Activated CD4-positive, alpha-beta T cell treated with anti-CD3 and anti-CD28 coated beads for 36 hours (primary cell): ENCODE measurements at regions of chr3 and their contacts with region 1.

Region 1: DNA sequence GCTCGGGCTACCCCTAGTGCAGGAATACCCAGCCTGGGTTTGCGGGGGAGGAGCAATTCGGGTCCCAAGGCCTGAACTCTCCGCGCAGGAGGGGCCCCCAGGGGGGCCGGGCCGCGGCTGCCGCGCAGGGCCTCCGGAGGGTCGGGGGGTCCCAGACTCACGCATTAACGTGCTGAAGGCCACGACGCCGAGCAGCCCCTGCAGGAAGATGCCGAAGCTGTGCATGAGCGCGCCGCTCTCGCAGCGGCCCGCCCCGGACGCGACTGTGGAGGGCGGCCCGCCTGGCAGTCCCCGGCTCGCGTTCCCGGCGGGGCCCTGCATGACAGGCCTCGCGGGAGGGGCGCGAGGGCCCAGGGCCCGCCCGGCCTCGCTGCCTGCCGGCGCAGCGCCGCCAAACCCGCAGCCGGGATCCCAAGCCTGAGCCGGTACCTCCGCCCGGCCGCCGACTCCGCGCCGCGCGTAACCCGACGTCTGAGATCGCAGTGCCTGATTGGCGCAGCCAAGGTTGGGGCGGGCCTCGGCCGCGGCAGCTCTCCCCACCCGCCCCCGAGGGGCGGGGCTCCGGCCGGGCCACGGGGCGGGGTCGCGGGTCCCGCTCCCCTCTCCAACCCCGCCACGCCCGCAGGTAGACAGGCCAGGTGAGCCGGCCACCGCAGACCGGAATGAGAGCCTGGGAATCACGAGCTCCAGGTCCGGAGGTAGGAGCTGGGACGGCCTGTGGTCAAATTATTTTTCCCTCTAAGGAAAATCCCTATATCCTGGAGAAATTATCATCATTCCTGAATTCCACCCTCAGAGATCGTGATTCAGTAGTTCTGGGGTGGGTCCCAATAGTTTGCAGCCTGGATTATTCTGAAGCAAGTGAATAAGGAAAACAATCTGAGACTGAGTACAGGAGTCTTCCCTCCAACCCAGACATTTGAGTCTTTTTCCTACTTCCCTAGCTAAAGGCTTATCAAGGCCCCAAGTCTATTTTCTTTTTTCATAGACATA is at the start of gene STIMATE:
- DNase-seq: peak; percentile 91
- ATAC-seq: peak; percentile 82
- H3K4me3 Mint-ChIP-seq: peak within 1 kb of the TSS; percentile 81
- H3K27ac Mint-ChIP-seq: peak within 1 kb of the TSS; percentile 48
- H3K4me1 Mint-ChIP-seq: peaks cover 49% of the 10 kb centered on the region
- H3K27me3 Mint-ChIP-seq: no peaks in the 10 kb centered on the region
- total RNA-seq, gene STIMATE: 12.0 to 17.1 TPM

Region 2: DNA sequence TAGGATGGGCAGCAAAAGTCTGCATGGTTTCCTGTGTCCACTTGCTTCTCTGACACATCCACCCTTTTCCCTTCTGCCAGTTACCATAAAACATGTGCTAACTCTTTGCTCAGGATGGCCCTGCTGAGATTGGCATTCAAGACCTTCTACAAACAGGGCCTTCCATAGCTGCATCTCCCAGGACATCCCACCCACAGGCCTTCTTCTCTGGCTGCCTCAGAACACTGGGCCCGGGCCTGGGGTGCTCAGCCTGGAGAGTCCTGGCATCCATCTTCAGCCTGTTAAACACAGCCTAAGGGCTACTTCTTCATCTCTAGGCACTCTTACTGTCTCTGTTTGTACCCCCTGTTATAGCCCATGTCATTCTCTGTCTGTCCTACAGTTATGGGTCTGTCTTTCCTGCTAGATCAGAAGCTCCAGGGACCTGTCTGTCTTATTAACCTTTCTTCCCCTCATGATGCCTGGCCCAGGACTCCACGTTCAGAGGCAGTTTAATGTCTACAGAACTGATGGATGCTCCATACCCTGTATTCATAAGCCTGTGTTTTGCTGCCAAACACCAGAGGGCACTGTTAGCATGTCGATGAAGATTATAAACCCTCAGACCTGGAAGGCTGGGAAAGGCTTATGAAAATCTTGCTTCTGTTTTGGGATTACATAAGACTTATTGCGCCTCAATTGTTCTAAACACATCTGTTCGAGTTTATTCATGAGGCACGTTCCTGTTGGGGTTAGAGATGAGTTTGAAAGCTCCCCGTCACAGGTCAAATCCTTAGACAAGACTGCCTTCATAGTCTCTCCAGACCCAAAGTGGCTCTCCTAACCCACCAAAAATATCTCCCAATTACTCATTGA is 469.0 kb before region 1 on chr3:
- CTCF ChIA-PET with region 1: no interaction called
- POLR2A ChIA-PET with region 1: no interaction called
- intact Hi-C with region 1: no loop called
- DNase-seq: peak; percentile 61
- ATAC-seq: peak; percentile 90
- H3K4me3 Mint-ChIP-seq: no peak overlapping the region
- H3K27ac Mint-ChIP-seq: no peak overlapping the region
- H3K4me1 Mint-ChIP-seq: no peaks in the 10 kb centered on the region
- H3K27me3 Mint-ChIP-seq: no peaks in the 10 kb centered on the region

Region 3: DNA sequence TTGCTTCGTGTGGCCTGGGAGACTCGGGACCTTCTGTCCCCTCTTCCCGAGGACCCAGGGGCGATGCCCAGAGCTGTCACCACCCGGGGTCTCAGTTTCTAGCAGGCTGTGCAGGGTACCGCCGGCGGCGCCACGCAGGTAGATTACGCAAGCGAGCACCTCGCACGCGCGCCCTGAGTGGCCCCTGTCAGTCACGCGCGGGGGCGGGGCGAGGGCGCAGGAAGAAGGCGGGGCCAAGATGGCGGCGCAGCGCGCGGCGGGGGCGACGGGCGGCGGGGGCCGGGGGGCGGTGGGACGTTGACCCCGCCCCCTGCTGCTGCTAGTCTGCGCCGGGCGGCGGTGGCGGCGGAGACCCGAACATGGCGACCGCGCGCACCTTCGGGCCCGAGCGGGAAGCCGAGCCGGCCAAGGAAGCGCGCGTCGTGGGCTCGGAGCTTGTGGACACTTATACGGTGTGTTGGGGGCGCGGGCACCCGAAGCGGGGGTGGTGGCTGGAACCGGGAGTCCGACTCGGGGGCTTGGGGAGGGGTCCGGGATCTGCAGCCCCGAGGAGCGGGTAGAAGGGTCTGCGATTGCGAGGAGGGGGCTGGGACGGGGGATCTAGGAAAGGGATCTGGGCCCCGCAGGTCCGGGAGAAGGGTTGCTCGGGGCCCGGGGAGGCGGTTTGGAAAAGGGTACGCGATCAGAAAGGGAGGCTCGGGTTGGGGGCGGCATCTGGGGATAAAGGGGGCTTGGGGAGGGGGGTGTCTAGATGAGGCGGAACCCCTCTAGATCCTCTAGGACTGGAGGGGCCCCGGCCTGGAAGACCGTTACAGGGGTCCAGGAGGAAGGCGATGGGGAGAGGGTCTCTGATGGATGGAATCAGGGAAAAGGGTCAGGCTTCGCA is 441.9 kb before region 1 on chr3 and contains the start of gene NISCH:
- CTCF ChIA-PET with region 1: no interaction called
- POLR2A ChIA-PET with region 1: no interaction called
- intact Hi-C with region 1: loop called in 1 of 2 experiments (anchors 5 kb)
- DNase-seq: peak; percentile 98
- ATAC-seq: peak; percentile 88
- H3K4me3 Mint-ChIP-seq: peak within 1 kb of the TSS; percentile 96
- H3K27ac Mint-ChIP-seq: peak within 1 kb of the TSS; percentile 95
- H3K4me1 Mint-ChIP-seq: peaks cover 36% of the 10 kb centered on the region
- H3K27me3 Mint-ChIP-seq: no peaks in the 10 kb centered on the region
- total RNA-seq, gene NISCH: 61.4 to 68.9 TPM

Region 4: DNA sequence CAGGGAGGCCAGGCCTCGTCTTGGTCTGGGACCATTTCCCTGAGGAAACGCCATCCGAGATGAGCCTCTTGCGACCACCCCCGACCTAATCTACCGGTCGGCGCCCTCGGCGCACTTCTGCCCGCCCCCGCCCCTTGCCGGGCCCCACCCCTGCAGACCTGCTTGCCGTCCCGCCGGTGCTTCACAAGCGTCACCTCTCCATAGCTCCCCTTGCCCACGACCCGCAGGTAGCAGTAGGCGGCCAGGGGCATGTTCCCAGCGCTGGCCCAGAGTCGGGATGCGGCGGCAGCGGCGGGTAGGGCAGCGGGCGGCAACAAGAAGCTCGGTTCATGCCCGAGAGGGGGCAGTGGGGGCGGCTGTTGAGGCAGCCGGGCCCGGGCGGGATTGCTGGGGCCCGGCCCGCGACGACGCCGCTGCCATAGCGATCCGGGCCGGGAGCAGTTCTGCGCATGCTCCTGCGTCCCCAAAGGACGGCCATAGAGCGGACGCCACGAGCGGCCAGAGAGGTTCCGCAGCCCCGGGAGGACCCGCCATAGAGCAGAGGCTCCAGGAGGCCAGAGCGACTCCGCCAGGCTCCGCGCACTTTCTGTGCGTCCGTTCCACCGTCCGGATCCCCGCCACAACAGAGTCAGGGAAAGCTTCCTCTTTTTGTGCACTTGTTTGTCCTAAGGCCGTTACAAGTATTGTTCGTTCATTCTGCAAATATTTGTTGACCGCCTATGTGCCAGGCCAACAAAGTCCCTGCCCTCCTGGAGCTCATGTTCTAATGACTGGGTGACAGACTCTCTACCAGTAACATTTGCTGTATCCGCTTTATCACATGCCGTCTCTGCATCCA is 126.7 kb before region 1 on chr3 and contains the start of gene NEK4:
- CTCF ChIA-PET with region 1: no interaction called
- POLR2A ChIA-PET with region 1: no interaction called
- intact Hi-C with region 1: loop called in 1 of 2 experiments (anchors 2 kb)
- DNase-seq: peak; percentile 93
- ATAC-seq: peak; percentile 98
- H3K4me3 Mint-ChIP-seq: peak within 1 kb of the TSS; percentile 81
- H3K27ac Mint-ChIP-seq: peak within 1 kb of the TSS; percentile 94
- H3K4me1 Mint-ChIP-seq: peaks cover 15% of the 10 kb centered on the region
- H3K27me3 Mint-ChIP-seq: no peaks in the 10 kb centered on the region
- total RNA-seq, gene NEK4: 19.1 to 21.4 TPM

Region 5: DNA sequence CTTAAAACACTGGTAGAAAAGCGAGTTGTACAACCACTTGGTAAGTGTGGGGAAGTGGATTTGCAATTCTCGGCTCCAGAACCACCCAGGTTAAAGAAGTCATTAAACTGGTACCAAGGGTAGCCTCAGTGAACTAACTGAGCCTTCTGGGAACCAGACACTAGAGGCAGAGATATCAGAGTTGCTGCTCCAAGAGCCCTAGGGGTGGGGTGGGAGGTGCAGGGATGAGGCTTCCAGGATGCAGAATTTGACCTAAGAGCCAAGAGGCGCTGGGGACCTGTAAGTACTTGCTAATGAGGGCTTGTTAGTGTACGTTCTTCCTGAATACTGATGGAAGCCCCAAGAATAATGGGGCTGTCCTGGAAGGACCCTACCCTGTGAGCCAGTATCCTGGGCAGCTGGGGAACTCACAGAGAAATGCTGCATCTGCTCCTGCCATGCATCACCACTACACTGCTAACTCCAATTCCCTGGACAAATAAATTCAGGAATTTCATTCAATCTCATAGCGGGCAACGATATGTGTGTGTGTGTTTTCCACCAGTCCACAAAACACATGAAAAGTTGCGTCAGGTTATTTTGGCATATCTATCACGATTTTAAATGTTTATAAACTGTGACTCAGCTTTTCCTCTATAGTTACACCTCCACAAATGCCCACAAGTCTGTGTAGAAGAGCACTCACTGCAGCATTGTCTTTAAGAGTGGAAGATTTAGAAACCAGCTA is 23.8 kb before region 1 on chr3:
- CTCF ChIA-PET with region 1: interaction called, 11 read pairs
- POLR2A ChIA-PET with region 1: no interaction called
- intact Hi-C with region 1: loop called in 1 of 2 experiments (anchors 1 kb)
- DNase-seq: no peak
- ATAC-seq: peak; percentile 69
- H3K4me3 Mint-ChIP-seq: no peak overlapping the region
- H3K27ac Mint-ChIP-seq: no peak overlapping the region
- H3K4me1 Mint-ChIP-seq: peaks cover 37% of the 10 kb centered on the region
- H3K27me3 Mint-ChIP-seq: no peaks in the 10 kb centered on the region

Region 6: GRCh38 chr3:52887166-52887565 is 10.3 kb before region 1 on chr3:
- CTCF ChIA-PET with region 1: no interaction called
- POLR2A ChIA-PET with region 1: no interaction called
- intact Hi-C with region 1: no loop called
- DNase-seq: no peak
- ATAC-seq: no peak
- H3K4me3 Mint-ChIP-seq: no peak overlapping the region
- H3K27ac Mint-ChIP-seq: no peak overlapping the region
- H3K4me1 Mint-ChIP-seq: peaks cover 25% of the 10 kb centered on the region
- H3K27me3 Mint-ChIP-seq: no peaks in the 10 kb centered on the region

Region 7: GRCh38 chr3:52910823-52911222 is 13.4 kb after region 1 on chr3:
- CTCF ChIA-PET with region 1: no interaction called
- POLR2A ChIA-PET with region 1: no interaction called
- intact Hi-C with region 1: no loop called
- DNase-seq: no peak
- ATAC-seq: no peak
- H3K4me3 Mint-ChIP-seq: no peak overlapping the region
- H3K27ac Mint-ChIP-seq: peak overlapping the region; percentile 58
- H3K4me1 Mint-ChIP-seq: no peaks in the 10 kb centered on the region
- H3K27me3 Mint-ChIP-seq: no peaks in the 10 kb centered on the region

Region 8: DNA sequence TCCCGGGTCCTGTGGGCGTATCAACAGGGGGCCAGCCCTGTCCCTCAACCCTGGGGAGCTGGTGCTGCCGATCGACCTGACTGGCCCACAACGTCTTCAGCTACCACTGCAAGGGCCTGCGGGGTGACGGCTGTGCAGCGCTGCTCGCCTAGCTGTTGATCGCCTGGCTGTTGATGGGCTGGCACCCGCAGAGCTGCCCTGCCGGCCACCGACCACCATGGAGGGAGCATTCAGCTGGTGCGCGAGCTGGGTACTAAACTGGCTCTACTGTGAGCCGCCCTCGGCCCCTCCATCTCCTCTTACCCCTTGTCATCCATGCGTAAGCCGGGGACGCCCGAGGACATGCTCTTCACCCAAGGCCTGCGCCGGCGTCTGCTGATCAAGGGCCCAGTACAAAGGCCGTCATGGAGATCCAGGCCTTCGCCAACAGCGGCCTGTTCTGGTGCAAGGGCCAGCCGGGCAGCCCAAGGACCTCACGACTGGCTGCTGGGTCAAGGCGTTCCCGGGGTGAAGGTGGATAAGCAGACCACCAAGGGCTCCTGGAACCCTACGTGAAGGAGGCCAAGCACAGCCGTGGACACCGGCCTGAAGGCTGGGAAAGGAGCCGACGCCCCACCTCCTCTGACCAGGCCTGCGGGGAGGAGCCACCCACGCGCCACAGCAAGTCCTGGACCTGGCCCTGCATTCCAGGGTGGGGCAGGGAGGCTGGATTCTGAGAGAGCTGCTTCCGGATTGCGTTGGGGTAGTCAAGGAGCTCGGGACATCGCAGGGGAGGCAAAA is 101.5 kb after region 1 on chr3:
- CTCF ChIA-PET with region 1: no interaction called
- POLR2A ChIA-PET with region 1: no interaction called
- intact Hi-C with region 1: no loop called
- DNase-seq: no peak
- ATAC-seq: no peak
- H3K4me3 Mint-ChIP-seq: no peak overlapping the region
- H3K27ac Mint-ChIP-seq: no peak overlapping the region
- H3K4me1 Mint-ChIP-seq: peaks cover 11% of the 10 kb centered on the region
- H3K27me3 Mint-ChIP-seq: no peaks in the 10 kb centered on the region

Region 9: GRCh38 chr3:53045518-53046170 is 148.2 kb after region 1 on chr3 and contains the start of gene SFMBT1:
- CTCF ChIA-PET with region 1: no interaction called
- POLR2A ChIA-PET with region 1: no interaction called
- intact Hi-C with region 1: loop called (anchors 1 to 5 kb)
- DNase-seq: peak; percentile 87
- ATAC-seq: peak; percentile 62
- H3K4me3 Mint-ChIP-seq: peak within 1 kb of the TSS; percentile 93
- H3K27ac Mint-ChIP-seq: peak within 1 kb of the TSS; percentile 96
- H3K4me1 Mint-ChIP-seq: peaks cover 43% of the 10 kb centered on the region
- H3K27me3 Mint-ChIP-seq: no peaks in the 10 kb centered on the region
- total RNA-seq, gene SFMBT1: 14.5 to 20.3 TPM

Region 10: GRCh38 chr3:53160660-53161449 is 263.4 kb after region 1 on chr3 and contains the start of gene PRKCD:
- CTCF ChIA-PET with region 1: no interaction called
- POLR2A ChIA-PET with region 1: no interaction called
- intact Hi-C with region 1: loop called in 1 of 2 experiments (anchors 5 kb)
- DNase-seq: peak; percentile 91
- ATAC-seq: peak; percentile 75
- H3K4me3 Mint-ChIP-seq: peak within 1 kb of the TSS; percentile 75
- H3K27ac Mint-ChIP-seq: peak within 1 kb of the TSS; percentile 83
- H3K4me1 Mint-ChIP-seq: peaks cover 19% of the 10 kb centered on the region
- H3K27me3 Mint-ChIP-seq: peaks cover 10% of the 10 kb centered on the region
- total RNA-seq, gene PRKCD: 22.0 to 26.5 TPM